Activated CD8-positive, alpha-beta T cell treated with anti-CD3 and anti-CD28 coated beads, Interleukin-2, amount 10 ng/mL, durations not matched to agents 7 days and 5 days (primary cell): ENCODE measurements at regions of chr7 and their contacts with region 1.

Region 1: DNA sequence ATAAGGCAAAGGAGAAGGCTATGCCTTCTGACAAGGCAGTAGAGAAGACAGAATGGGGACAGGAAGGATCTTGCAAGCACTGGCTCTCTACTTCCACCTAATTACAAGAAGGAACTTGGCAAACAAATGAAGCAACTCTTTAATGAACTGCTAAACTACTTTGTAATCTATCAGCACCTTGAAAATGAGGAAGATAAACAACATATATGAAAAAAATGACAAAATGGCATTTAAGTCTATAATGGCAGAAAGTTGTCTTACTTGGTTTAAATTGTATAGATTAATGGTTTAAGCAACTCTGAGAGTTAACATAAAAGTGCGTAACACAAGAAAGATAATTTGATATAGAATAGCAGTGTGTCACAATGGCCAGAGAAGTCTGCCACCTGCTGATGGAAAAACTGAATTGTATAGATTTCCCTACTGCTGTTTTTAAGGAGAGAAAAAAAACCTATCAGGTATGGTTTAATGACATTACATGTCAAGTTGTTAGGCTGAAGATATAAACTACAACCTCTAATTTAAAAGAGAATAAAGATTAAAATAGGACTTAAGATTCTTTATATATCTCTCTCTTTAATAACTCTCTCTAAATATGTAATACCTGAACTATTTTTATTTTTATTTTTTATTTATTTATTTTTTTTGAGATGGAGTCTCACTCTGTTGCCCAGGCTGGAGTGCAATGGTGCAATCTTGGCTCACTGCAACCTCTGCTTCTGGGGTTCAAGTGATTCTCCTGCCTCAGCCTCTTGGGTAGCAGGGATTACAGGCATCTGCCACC is 11.8 kb downstream of the NT5C3A start:
- DNase-seq: peak; percentile 54
- ATAC-seq: peak; percentile 51
- H3K4me3 Mint-ChIP-seq: no peak overlapping the region
- H3K27ac Mint-ChIP-seq: no peak overlapping the region
- H3K4me1 Mint-ChIP-seq: peaks cover 49% of the 10 kb centered on the region
- H3K27me3 Mint-ChIP-seq: no peaks in the 10 kb centered on the region

Region 2: DNA sequence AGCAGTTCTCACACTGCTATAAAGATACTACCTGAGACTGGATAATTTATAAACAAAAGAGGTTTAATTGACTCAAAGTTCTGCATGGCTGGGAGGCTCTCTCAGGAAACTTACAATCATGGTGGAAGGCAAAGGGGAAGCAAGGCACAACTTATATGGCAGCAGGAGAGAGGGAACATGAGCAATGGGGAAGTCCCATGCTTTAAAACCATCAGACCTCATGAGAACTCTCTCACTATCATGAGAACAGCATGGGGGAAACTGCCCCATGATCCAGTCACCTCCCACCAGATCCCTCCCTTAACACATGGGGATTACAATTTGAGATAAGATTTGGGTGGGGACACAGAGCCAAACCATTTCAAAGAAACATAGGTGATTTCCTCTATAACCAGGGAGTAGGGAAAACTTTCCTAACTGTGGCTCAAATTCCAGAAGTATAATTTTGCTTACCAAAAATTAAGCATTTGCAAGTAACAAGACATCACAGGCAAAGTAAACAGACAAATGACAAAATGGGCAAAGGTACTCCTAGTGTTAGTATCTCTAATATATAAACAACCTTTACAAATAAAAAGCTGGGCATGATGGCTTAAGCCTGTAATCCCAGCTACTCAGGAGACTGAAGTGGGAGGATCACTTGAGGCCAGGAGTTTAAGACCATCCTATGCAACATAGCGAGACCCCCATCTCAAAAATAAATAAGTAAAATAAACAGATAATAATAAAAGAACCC is 247.2 kb before region 1 on chr7:
- CTCF ChIA-PET with region 1: interaction called, 12 read pairs
- POLR2A ChIA-PET with region 1: no interaction called
- DNase-seq: no peak
- ATAC-seq: no peak
- H3K4me3 Mint-ChIP-seq: no peak overlapping the region
- H3K27ac Mint-ChIP-seq: no peak overlapping the region
- H3K4me1 Mint-ChIP-seq: no peaks in the 10 kb centered on the region
- H3K27me3 Mint-ChIP-seq: no peaks in the 10 kb centered on the region

Region 3: GRCh38 chr7:33062782-33063443 is 12.2 kb after region 1 on chr7:
- CTCF ChIA-PET with region 1: interaction called, 11 read pairs
- POLR2A ChIA-PET with region 1: interaction called, 14 read pairs
- DNase-seq: peak; percentile 93
- ATAC-seq: peak; percentile 95
- H3K4me3 Mint-ChIP-seq: peak overlapping the region; percentile 93
- H3K27ac Mint-ChIP-seq: peak overlapping the region; percentile 94
- H3K4me1 Mint-ChIP-seq: peaks cover 35% of the 10 kb centered on the region
- H3K27me3 Mint-ChIP-seq: peaks cover 8% of the 10 kb centered on the region